ENCODE measurements at regions of chr15 and their contacts with region 1.

Region 1: GRCh38 chr15:55290528-55291057 is 980 bp upstream of the RAB27A start:
- DNase-seq: peak; percentile 75 to 92 (median 86)
- ATAC-seq: peak; percentile 69
- H3K4me3 ChIP-seq: peak overlapping the region; percentile 74 to 94
- H3K4me3 Mint-ChIP-seq: peak overlapping the region; percentile 93
- H3K27ac ChIP-seq: peak overlapping the region; percentile 81 to 94
- H3K27ac Mint-ChIP-seq: peak overlapping the region; percentile 94
- H3K4me1 ChIP-seq: peaks cover 13% of the 10 kb centered on the region
- H3K4me1 Mint-ChIP-seq: peaks cover 33% of the 10 kb centered on the region
- H3K27me3 ChIP-seq: no peaks in the 10 kb centered on the region
- H3K27me3 Mint-ChIP-seq: no peaks in the 10 kb centered on the region
- CTCF ChIP-seq: peak; percentile 97

Region 2: GRCh38 chr15:55196458-55197361 is 93.9 kb before region 1 on chr15 and contains the start of gene RSL24D1:
- CTCF ChIA-PET with region 1: interaction called, 6 read pairs
- POLR2A ChIA-PET with region 1: interaction called, 7 read pairs
- intact Hi-C with region 1: loop called (anchors 1 kb)
- DNase-seq: peak; percentile 92 to 100 (median 96)
- ATAC-seq: peak; percentile 95
- H3K4me3 ChIP-seq: peak within 1 kb of the TSS; percentile 82 to 90
- H3K4me3 Mint-ChIP-seq: no peak within 1 kb of the TSS
- H3K27ac ChIP-seq: peak within 1 kb of the TSS; percentile 94
- H3K27ac Mint-ChIP-seq: no peak within 1 kb of the TSS
- H3K4me1 ChIP-seq: peaks cover 37% of the 10 kb centered on the region
- H3K4me1 Mint-ChIP-seq: peaks cover 21% of the 10 kb centered on the region
- H3K27me3 ChIP-seq: no peaks in the 10 kb centered on the region
- H3K27me3 Mint-ChIP-seq: no peaks in the 10 kb centered on the region
- CTCF ChIP-seq: no peak
- total RNA-seq, gene RSL24D1: 181 to 186 TPM

Region 3: GRCh38 chr15:55230051-55230670 is 60.4 kb before region 1 on chr15:
- CTCF ChIA-PET with region 1: interaction called, 11 read pairs
- POLR2A ChIA-PET with region 1: interaction called, 3 read pairs
- intact Hi-C with region 1: no loop called
- DNase-seq: peak in 2 of 9 experiments; percentile 30 to 57
- ATAC-seq: peak; percentile 55
- H3K4me3 ChIP-seq: no peak overlapping the region
- H3K4me3 Mint-ChIP-seq: peak overlapping the region; percentile 73
- H3K27ac ChIP-seq: peak overlapping the region in 1 of 2 experiments; percentile 24
- H3K27ac Mint-ChIP-seq: peak overlapping the region; percentile 84
- H3K4me1 ChIP-seq: peaks cover 5% of the 10 kb centered on the region
- H3K4me1 Mint-ChIP-seq: peaks cover 29% of the 10 kb centered on the region
- H3K27me3 ChIP-seq: no peaks in the 10 kb centered on the region
- H3K27me3 Mint-ChIP-seq: no peaks in the 10 kb centered on the region
- CTCF ChIP-seq: no peak

Region 4: GRCh38 chr15:55250392-55250791 is 40.2 kb before region 1 on chr15:
- CTCF ChIA-PET with region 1: interaction called, 9 read pairs
- POLR2A ChIA-PET with region 1: no interaction called
- intact Hi-C with region 1: loop called (anchors 2 to 5 kb)
- DNase-seq: peak in 1 of 9 experiments; percentile 32
- ATAC-seq: no peak
- H3K4me3 ChIP-seq: no peak overlapping the region
- H3K4me3 Mint-ChIP-seq: peak overlapping the region; percentile 44
- H3K27ac ChIP-seq: peak overlapping the region in 1 of 2 experiments; percentile 60
- H3K27ac Mint-ChIP-seq: peak overlapping the region; percentile 86
- H3K4me1 ChIP-seq: peaks cover 48% of the 10 kb centered on the region
- H3K4me1 Mint-ChIP-seq: peaks cover 75% of the 10 kb centered on the region
- H3K27me3 ChIP-seq: no peaks in the 10 kb centered on the region
- H3K27me3 Mint-ChIP-seq: no peaks in the 10 kb centered on the region
- CTCF ChIP-seq: no peak

Region 5: DNA sequence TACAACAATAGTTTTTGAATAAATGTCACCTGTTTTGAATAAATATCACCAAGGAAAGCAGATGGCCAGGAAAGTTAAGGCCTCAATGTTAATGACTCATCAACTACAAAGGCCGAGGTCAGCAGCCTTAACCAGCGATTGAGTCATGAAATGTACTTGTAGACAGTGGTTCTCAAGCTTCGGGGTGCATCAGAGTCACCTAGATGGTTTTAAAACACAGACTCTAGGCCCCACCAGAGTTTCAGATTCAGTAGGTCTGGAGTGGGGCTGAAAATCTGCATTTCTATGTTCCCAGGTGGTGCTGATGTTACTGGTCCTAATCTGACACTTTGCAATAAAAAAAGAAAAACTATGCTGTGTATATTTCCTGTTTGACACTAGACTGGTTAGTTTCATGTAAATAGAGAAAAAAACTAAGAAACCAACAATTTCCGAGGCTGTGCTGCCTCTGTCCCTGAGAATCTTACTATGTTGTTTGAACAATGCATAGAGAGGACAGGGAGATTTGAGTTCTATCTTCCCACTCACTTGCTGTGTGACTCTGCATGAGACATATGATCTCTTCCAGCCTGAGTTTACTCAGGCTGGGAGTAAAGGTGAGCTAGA is 10.7 kb before region 1 on chr15:
- CTCF ChIA-PET with region 1: interaction called, 7 read pairs
- POLR2A ChIA-PET with region 1: interaction called, 8 read pairs
- intact Hi-C with region 1: loop called in 1 of 2 experiments (anchors 1 kb)
- DNase-seq: peak in 7 of 9 experiments; percentile 37 to 86 (median 68)
- ATAC-seq: peak; percentile 64
- H3K4me3 ChIP-seq: no peak overlapping the region
- H3K4me3 Mint-ChIP-seq: peak overlapping the region; percentile 44
- H3K27ac ChIP-seq: peak overlapping the region; percentile 2 to 87
- H3K27ac Mint-ChIP-seq: peak overlapping the region; percentile 86
- H3K4me1 ChIP-seq: peaks cover 77% of the 10 kb centered on the region
- H3K4me1 Mint-ChIP-seq: peaks cover 95% of the 10 kb centered on the region
- H3K27me3 ChIP-seq: no peaks in the 10 kb centered on the region
- H3K27me3 Mint-ChIP-seq: no peaks in the 10 kb centered on the region
- CTCF ChIP-seq: no peak

Region 6: DNA sequence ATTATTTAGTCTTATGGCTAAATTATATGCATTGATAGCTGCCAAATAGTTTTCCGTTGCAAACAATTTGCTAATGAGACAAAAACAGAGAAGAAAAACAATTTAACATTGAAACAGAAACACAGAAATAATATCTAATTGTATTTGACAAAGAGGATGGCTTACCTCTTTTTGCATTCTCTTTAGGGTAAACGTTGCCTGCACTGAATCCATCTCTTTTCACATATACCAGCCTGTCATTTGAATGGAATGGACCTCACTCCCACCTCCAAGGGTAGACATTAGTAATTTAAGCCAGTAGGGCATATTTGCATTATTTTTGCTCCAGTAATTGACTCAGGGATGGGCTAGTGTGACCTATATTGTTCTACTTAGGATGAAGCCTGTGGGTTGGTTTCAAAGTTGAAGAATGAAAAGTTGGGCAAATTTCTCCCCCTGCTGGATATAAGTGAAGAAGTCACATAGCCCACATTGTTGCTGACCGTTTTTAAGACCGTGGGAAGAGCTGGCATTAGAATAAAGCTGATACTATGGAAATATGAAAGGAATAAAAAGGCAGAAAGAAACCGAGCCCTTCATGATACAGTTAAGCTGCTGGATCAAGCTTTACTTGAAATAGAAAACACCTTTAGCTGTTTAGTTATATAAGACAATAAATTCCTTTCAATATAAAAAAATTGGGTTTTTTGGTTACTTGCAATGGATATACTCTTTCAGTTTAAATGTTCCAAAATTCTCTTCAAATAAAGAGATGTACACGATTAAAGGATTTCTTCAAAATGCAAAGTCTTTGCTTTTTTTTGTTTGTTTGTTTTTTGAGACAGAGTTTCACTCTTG is 144.6 kb after region 1 on chr15:
- CTCF ChIA-PET with region 1: interaction called, 8 read pairs
- POLR2A ChIA-PET with region 1: no interaction called
- intact Hi-C with region 1: loop called (anchors 2 kb)
- DNase-seq: peak in 3 of 9 experiments; percentile 10 to 66 (median 56)
- ATAC-seq: peak; percentile 51
- H3K4me3 ChIP-seq: no peak overlapping the region
- H3K4me3 Mint-ChIP-seq: no peak overlapping the region
- H3K27ac ChIP-seq: no peak overlapping the region
- H3K27ac Mint-ChIP-seq: no peak overlapping the region
- H3K4me1 ChIP-seq: no peaks in the 10 kb centered on the region
- H3K4me1 Mint-ChIP-seq: no peaks in the 10 kb centered on the region
- H3K27me3 ChIP-seq: no peaks in the 10 kb centered on the region
- H3K27me3 Mint-ChIP-seq: no peaks in the 10 kb centered on the region
- CTCF ChIP-seq: peak; percentile 64